AG04449 (cell line): ENCODE measurements at regions of chrX and their contacts with region 1.

Region 1: DNA sequence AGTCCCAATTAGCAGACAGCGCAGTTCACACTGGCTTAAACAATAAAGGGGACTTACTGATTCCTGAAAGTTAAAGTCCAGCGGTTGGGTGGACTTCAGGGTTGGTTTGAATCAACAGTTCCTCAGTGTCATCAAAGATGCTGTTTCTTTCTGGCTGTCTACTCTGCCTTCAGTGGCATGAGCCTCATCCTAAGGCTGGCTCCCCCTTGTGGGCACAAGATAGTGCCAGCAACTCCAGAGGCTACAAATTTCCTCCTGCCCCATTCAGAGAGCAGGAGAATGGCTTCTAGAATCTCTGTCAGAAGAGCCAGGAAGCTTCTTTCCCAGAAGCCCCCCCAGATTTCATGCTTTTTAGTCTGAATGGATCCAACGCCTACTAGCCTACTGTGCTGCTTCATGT is 82.4 kb upstream of the MTM1 start:
- DNase-seq: no peak
- H3K4me3 ChIP-seq: no peak overlapping the region
- CTCF ChIP-seq: peak; percentile 67

Region 2: GRCh38 chrX:149950681-149951080 is 535.3 kb before region 1 on chrX:
- CTCF ChIA-PET with region 1: interaction called, 20 read pairs
- POLR2A ChIA-PET with region 1: no interaction called
- DNase-seq: no peak
- H3K4me3 ChIP-seq: no peak overlapping the region
- CTCF ChIP-seq: peak; percentile 26

Region 3: DNA sequence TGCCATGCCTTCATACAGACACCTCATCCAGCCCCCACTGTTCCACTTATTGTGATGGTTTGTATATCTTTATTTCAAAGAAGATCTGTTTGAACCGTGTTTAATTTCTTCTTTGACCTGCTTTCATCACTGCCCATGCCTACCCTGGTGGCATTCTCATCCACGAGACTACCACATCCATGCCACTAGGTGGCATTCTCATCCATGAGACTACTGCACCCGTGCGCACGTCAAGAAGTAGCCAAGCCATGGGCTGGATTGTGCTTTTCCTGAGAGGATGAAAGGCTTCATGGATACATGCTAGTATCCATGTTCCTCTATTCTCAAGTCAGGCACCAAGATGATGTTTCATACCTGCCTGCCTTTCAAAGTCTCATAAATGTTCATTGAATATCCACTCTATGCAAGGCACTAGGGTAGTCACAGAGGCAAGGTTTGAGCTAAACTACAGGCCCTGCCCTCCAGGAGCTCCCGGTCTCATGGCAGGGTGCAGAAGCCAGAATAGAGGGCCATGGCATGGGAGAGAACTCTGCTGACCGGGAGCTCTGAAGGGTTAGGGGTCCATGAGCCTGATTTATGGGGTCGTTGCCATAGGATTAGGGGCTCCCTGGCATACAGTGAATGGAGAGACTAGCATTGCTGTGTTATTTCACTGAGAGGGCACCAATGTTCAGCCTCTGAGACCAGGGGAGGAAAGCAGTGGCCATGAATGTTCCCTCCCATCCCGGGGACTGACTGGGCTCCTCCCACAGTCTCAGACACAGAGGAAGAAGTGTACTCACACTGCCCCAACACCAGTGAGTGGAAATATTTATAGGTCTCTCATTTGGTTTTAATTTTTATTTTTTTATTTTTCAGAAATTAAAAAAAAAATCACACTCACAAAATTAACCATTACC is 522.9 kb before region 1 on chrX:
- CTCF ChIA-PET with region 1: interaction called, 20 read pairs
- POLR2A ChIA-PET with region 1: no interaction called
- DNase-seq: no peak
- H3K4me3 ChIP-seq: no peak overlapping the region
- CTCF ChIP-seq: peak; percentile 65

Region 4: GRCh38 chrX:150258463-150259430 is 227.3 kb before region 1 on chrX:
- CTCF ChIA-PET with region 1: no interaction called
- POLR2A ChIA-PET with region 1: no interaction called
- DNase-seq: no peak
- H3K4me3 ChIP-seq: no peak overlapping the region
- CTCF ChIP-seq: no peak

Region 5: DNA sequence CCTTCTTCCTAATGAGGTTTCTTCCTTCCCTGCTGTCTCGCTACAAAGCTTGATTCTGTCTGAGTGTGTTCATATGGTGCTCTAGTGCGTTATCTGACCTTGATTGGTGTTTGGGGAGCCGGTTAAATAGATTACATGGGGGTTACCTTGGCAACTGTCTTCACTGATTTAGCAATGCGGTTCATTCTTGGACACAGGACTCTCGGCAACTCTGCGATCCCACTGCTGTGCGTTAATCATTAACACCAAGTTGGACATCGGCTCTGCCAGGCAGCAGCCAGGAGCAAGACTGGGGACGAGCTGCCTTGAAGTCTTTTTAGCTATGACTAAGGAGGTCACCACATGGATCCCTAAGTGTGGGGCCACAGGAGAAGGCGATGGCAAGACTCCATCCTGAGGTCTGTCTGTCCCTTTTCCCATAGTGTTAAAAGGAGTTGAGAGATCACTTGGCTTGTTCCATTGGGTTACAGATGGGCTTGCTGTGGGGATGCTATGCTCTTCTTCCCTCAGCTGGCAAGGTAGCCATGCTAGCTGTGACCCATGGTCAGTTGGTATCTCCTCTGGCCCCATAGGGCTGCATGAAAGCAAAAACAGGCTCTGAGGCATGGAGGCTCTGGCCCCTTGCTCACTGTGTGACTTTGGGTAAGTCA is 216.3 kb before region 1 on chrX:
- CTCF ChIA-PET with region 1: no interaction called
- POLR2A ChIA-PET with region 1: no interaction called
- DNase-seq: no peak
- H3K4me3 ChIP-seq: no peak overlapping the region
- CTCF ChIP-seq: no peak